ENCODE measurements at regions of chr1 and their contacts with region 1.

Region 1: GRCh38 chr1:40338745-40339424 is 21.8 kb upstream of the COL9A2 start:
- DNase-seq: peak; percentile 97
- H3K4me3 Mint-ChIP-seq: peak overlapping the region; percentile 34
- H3K27ac Mint-ChIP-seq: peak overlapping the region; percentile 35
- H3K4me1 Mint-ChIP-seq: peaks cover 42% of the 10 kb centered on the region
- H3K27me3 Mint-ChIP-seq: no peaks in the 10 kb centered on the region

Region 2: GRCh38 chr1:40078512-40079333 is 260.2 kb before region 1 on chr1:
- intact Hi-C with region 1: loop called (anchors 2 kb)
- DNase-seq: peak; percentile 88
- H3K4me3 Mint-ChIP-seq: no peak overlapping the region
- H3K27ac Mint-ChIP-seq: peak overlapping the region; percentile 60
- H3K4me1 Mint-ChIP-seq: peaks cover 12% of the 10 kb centered on the region
- H3K27me3 Mint-ChIP-seq: no peaks in the 10 kb centered on the region

Region 3: DNA sequence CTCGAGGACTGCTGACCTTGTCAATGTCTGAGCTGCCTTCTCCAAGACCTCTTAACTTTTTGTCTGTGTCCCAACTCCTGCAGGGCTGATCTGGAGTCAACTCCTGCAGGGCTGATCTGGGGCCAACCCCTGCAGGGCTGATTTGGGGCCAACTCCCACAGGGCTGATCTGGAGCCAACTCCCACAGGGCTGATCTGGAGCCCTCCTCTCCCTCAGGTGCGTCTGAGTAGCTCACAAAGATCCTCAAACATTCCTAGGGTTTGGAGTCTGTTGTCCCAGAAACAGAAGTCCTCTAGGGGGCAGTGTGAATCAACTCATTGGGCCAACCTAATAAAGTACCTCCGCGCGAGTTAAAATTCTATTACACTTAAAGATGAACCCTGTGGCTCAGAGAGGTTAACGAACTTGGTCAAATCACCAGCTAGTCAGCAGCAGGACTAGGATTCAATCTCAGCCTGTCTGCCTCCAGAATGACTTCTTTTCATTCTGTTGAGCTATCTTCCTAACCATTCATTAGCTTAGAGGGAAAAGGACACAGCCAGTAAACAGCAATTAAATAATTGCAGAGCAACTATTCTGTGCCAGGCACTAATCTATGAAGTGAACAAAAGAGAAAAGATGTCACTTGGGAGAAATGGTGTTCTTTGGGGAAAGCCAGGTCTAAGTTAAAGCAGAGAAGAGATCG is 194.9 kb before region 1 on chr1:
- intact Hi-C with region 1: loop called (anchors 2 kb)
- DNase-seq: peak; percentile 88
- H3K4me3 Mint-ChIP-seq: no peak overlapping the region
- H3K27ac Mint-ChIP-seq: no peak overlapping the region
- H3K4me1 Mint-ChIP-seq: peaks cover 19% of the 10 kb centered on the region
- H3K27me3 Mint-ChIP-seq: peaks cover 54% of the 10 kb centered on the region

Region 4: DNA sequence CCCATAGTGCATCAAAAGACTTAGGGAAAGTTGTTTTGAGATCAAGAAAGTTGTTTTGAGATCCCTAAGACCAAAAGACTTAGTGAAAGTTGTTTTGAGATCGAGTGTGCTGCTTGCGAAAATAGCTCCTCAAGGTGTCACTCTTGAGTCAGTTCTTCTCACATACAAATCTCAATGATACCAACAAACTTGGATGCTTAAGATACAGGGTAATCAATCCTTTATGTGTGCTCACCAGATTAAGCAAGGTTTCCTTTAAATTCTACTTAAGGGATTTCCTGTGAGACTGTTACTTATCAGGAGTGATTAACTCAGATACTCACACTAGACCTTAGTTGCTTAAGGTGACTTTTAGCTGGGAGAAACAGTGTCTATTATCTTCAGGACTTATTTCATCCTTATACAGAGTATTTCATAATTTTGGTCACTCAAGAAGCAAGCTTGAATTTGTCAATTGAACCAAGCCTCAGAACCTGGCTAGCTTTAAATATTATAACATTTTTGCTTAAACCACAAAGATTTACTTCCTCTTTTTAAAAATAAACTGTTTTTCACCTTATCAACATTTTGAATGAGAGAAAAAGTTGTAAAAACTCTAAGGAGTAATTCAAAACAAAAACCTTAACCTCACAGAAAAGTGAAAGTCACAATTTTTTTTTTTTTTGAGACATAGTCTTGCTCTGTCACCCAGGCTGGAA is 185.7 kb before region 1 on chr1:
- intact Hi-C with region 1: loop called (anchors 1 kb)
- DNase-seq: peak; percentile 83
- H3K4me3 Mint-ChIP-seq: no peak overlapping the region
- H3K27ac Mint-ChIP-seq: no peak overlapping the region
- H3K4me1 Mint-ChIP-seq: peaks cover 6% of the 10 kb centered on the region
- H3K27me3 Mint-ChIP-seq: peaks cover 9% of the 10 kb centered on the region

Region 5: GRCh38 chr1:40315239-40315794 is 23.6 kb before region 1 on chr1:
- intact Hi-C with region 1: loop called (anchors 1 kb)
- DNase-seq: peak; percentile 95
- H3K4me3 Mint-ChIP-seq: peak overlapping the region; percentile 80
- H3K27ac Mint-ChIP-seq: peak overlapping the region; percentile 41
- H3K4me1 Mint-ChIP-seq: peaks cover 47% of the 10 kb centered on the region
- H3K27me3 Mint-ChIP-seq: peaks cover 24% of the 10 kb centered on the region

Region 6: GRCh38 chr1:40385437-40386358 is 46.8 kb after region 1 on chr1:
- intact Hi-C with region 1: loop called (anchors 2 kb)
- DNase-seq: peak; percentile 93
- H3K4me3 Mint-ChIP-seq: peak overlapping the region; percentile 88
- H3K27ac Mint-ChIP-seq: peak overlapping the region; percentile 99
- H3K4me1 Mint-ChIP-seq: peaks cover 79% of the 10 kb centered on the region
- H3K27me3 Mint-ChIP-seq: no peaks in the 10 kb centered on the region

Region 7: DNA sequence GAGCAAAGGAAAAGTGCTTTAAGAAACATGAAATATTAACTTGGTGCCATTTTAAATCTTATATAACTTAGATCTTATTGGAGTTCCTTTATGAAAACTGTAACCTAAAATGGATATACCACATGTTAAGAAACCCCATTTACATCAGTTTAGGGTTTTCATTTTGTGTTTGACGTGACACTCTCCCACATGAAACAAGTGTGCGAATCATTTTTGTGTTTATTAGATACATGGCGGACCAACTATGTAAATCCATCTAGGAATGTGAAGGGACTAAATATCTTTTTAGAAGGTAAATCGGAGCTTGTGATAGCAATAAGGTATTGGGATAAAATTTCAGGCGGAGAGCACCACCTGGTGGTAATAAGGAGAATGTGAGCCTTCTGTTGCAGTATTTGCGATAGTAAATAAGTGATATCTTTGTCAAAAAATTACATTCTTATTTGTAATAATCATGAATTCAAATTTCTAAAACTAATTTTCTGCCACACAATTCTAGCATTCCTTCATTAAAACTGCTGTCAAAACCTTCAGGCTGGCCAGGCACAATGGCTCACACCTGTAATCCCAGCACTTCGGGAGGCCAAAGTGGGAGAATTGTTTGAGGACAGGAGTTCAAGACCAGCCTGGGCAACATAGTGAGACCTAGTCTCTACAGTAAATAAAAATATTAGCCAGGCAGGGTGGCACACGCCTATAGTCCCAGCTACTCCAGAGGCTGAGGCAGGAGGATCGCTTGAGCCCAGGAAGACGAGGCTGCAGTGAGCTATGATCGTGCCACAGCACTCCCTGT is 66.0 kb after region 1 on chr1:
- intact Hi-C with region 1: loop called (anchors 1 kb)
- DNase-seq: peak; percentile 82
- H3K4me3 Mint-ChIP-seq: peak overlapping the region; percentile 77
- H3K27ac Mint-ChIP-seq: peak overlapping the region; percentile 95
- H3K4me1 Mint-ChIP-seq: peaks cover 50% of the 10 kb centered on the region
- H3K27me3 Mint-ChIP-seq: no peaks in the 10 kb centered on the region